ENCODE measurements at regions of chr1 and their contacts with region 1.

Region 1: GRCh38 chr1:8571200-8571984 is 246.0 kb downstream of the RERE start:
- DNase-seq: peak; percentile 70
- ATAC-seq: peak; percentile 86
- H3K4me3 ChIP-seq: no peak overlapping the region
- H3K27ac ChIP-seq: no peak overlapping the region
- H3K4me1 ChIP-seq: peaks cover 12% of the 10 kb centered on the region
- H3K27me3 ChIP-seq: no peaks in the 10 kb centered on the region
- CTCF ChIP-seq: peak; percentile 82

Region 2: DNA sequence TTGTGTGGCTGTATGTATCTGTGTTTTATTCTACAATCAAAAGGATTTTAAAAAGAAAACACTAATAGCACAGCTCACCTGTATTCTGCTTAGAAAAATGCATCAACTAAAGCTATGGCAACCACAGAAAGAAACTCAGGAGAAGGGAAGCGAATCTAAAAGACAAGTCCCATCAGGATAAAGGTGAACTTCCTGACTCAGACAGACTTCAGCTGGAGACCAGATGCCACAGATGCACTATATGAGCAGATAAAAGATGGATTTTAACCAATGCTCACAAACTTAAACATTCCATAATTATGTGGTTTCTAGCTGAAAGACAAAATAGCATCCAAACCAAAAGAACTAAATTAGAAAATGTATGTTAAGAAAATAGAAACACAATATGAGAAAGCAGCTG is 15.0 kb after region 1 on chr1:
- CTCF ChIA-PET with region 1: no interaction called
- POLR2A ChIA-PET with region 1: no interaction called
- intact Hi-C with region 1: no loop called
- DNase-seq: no peak
- ATAC-seq: no peak
- H3K4me3 ChIP-seq: no peak overlapping the region
- H3K27ac ChIP-seq: no peak overlapping the region
- H3K4me1 ChIP-seq: no peaks in the 10 kb centered on the region
- H3K27me3 ChIP-seq: no peaks in the 10 kb centered on the region
- CTCF ChIP-seq: no peak

Region 3: GRCh38 chr1:8598060-8598724 is 26.8 kb after region 1 on chr1:
- CTCF ChIA-PET with region 1: no interaction called
- POLR2A ChIA-PET with region 1: no interaction called
- intact Hi-C with region 1: no loop called
- DNase-seq: no peak
- ATAC-seq: no peak
- H3K4me3 ChIP-seq: no peak overlapping the region
- H3K27ac ChIP-seq: no peak overlapping the region
- H3K4me1 ChIP-seq: no peaks in the 10 kb centered on the region
- H3K27me3 ChIP-seq: no peaks in the 10 kb centered on the region
- CTCF ChIP-seq: 0 out of 2 replicates have a peak, but pooled peaks have one; percentile 8

Region 4: DNA sequence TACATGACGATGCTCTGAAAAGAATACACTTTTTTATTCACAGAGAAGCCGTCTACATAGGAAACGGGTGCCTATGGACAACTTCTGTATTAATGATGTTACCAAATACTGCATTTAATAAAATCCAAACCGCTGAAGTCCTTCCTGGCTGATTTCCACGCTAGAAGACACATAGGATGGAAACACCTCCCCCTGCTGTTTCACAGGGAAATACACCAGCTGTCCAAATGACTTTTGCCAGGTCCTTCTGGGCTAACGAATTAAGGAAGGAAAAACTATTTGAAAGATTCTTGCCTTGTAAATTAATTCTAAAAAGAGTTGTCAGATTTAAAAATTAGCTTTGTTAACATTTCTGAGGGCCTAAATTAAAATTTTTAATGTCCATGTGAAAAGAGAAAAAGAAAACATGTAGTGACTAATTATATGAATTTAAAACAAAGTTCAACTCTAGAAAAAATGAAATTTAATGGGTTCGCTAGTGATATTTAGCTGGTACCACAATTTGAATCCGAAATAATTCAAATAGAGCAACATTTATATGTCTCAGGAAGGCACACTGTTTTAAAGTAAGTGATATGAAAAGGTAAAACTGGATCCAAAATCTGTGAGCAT is 100.0 kb after region 1 on chr1:
- CTCF ChIA-PET with region 1: no interaction called
- POLR2A ChIA-PET with region 1: no interaction called
- intact Hi-C with region 1: loop called (anchors 2 kb)
- DNase-seq: peak; percentile 71
- ATAC-seq: 0 out of 2 replicates have a peak, but pooled peaks have one; percentile 18
- H3K4me3 ChIP-seq: no peak overlapping the region
- H3K27ac ChIP-seq: 0 out of 2 replicates have a peak overlapping the region, but pooled peaks have one; percentile 2
- H3K4me1 ChIP-seq: peaks cover 57% of the 10 kb centered on the region
- H3K27me3 ChIP-seq: no peaks in the 10 kb centered on the region
- CTCF ChIP-seq: peak; percentile 90

Region 5: DNA sequence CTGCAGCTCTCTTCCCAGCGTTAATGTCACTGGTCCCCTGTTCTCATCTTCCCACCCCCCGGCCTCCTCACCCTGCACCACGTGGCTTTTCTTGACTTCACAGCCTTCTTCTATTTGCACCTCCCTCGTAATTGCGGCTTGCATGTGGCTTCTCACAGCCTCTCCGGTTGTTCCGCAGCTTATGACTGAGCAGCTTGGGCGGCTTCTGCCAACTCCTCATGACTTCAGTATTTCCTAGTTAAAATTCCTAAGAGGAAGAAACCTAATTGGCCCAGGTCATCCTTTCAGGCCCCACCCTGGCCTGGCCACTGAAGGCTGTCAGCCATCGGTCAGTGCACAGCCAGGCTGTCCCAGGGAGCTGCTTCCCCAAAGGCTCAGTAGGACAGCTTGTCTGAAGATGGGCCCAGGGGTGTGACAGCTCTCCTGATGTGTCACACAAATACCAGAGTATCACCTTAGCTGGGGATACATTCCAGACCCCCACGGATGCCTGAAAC is 254.6 kb after region 1 on chr1:
- CTCF ChIA-PET with region 1: interaction called, 10 read pairs
- POLR2A ChIA-PET with region 1: no interaction called
- intact Hi-C with region 1: no loop called
- DNase-seq: peak; percentile 90
- ATAC-seq: peak; percentile 78
- H3K4me3 ChIP-seq: no peak overlapping the region
- H3K27ac ChIP-seq: peak overlapping the region; percentile 75
- H3K4me1 ChIP-seq: peaks cover 46% of the 10 kb centered on the region
- H3K27me3 ChIP-seq: no peaks in the 10 kb centered on the region
- CTCF ChIP-seq: no peak